Activated CD8-positive, alpha-beta T cell treated with anti-CD3 and anti-CD28 coated beads for 36 hours (primary cell): ENCODE measurements at regions of chr21 and their contacts with region 1.

Region 1: GRCh38 chr21:31604591-31605190 is 54.8 kb upstream of the SOD1 start:
- DNase-seq: peak; percentile 86
- ATAC-seq: peak; percentile 65
- H3K4me3 Mint-ChIP-seq: no peak overlapping the region
- H3K27ac Mint-ChIP-seq: no peak overlapping the region
- H3K4me1 Mint-ChIP-seq: peaks cover 5% of the 10 kb centered on the region
- H3K27me3 Mint-ChIP-seq: peaks cover 2% of the 10 kb centered on the region
- CTCF ChIP-seq: peak; percentile 79

Region 2: DNA sequence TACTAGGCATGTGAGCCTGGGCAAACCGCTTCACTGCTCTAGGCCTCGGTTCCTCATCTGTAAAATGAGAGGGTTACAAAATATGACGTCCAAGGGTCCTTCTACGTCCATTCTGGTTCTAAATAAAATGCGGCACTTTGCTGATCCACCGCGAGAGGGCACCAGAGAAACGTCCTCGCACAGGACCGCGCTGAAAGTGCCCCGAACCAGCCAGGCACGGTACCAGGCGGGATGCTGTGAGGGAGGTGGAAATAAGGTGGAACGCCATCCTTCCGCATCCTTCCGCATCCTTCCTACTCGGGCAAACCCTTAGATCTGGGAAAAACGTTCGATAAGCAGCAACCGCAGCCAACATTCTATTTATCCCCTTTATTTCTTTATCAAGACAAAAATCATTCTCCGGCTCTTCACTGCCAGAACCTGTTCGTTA is 506.1 kb before region 1 on chr21:
- CTCF ChIA-PET with region 1: interaction called, 15 read pairs
- POLR2A ChIA-PET with region 1: no interaction called
- intact Hi-C with region 1: loop called (anchors 5 kb)
- DNase-seq: peak; percentile 84
- ATAC-seq: peak; percentile 87
- H3K4me3 Mint-ChIP-seq: no peak overlapping the region
- H3K27ac Mint-ChIP-seq: no peak overlapping the region
- H3K4me1 Mint-ChIP-seq: peaks cover 18% of the 10 kb centered on the region
- H3K27me3 Mint-ChIP-seq: peaks cover 2% of the 10 kb centered on the region
- CTCF ChIP-seq: peak; percentile 92

Region 3: GRCh38 chr21:31107871-31108270 is 496.8 kb before region 1 on chr21:
- CTCF ChIA-PET with region 1: interaction called, 15 read pairs
- POLR2A ChIA-PET with region 1: no interaction called
- intact Hi-C with region 1: no loop called
- DNase-seq: no peak
- ATAC-seq: no peak
- H3K4me3 Mint-ChIP-seq: no peak overlapping the region
- H3K27ac Mint-ChIP-seq: no peak overlapping the region
- H3K4me1 Mint-ChIP-seq: peaks cover 12% of the 10 kb centered on the region
- H3K27me3 Mint-ChIP-seq: no peaks in the 10 kb centered on the region
- CTCF ChIP-seq: no peak

Region 4: GRCh38 chr21:31198575-31198974 is 406.1 kb before region 1 on chr21:
- CTCF ChIA-PET with region 1: interaction called, 9 read pairs
- POLR2A ChIA-PET with region 1: no interaction called
- intact Hi-C with region 1: loop called (anchors 2 kb)
- DNase-seq: no peak
- ATAC-seq: peak; percentile 58
- H3K4me3 Mint-ChIP-seq: no peak overlapping the region
- H3K27ac Mint-ChIP-seq: no peak overlapping the region
- H3K4me1 Mint-ChIP-seq: peaks cover 48% of the 10 kb centered on the region
- H3K27me3 Mint-ChIP-seq: no peaks in the 10 kb centered on the region
- CTCF ChIP-seq: peak; percentile 73

Region 5: GRCh38 chr21:31592963-31593560 is 11.6 kb before region 1 on chr21:
- CTCF ChIA-PET with region 1: interaction called, 11 read pairs
- POLR2A ChIA-PET with region 1: no interaction called
- intact Hi-C with region 1: no loop called
- DNase-seq: no peak
- ATAC-seq: no peak
- H3K4me3 Mint-ChIP-seq: no peak overlapping the region
- H3K27ac Mint-ChIP-seq: no peak overlapping the region
- H3K4me1 Mint-ChIP-seq: no peaks in the 10 kb centered on the region
- H3K27me3 Mint-ChIP-seq: no peaks in the 10 kb centered on the region
- CTCF ChIP-seq: no peak